ENCODE measurements at regions of chr2 and their contacts with region 1.

Region 1: GRCh38 chr2:69559442-69560146 is 83.9 kb downstream of the AAK1 start:
- DNase-seq: peak in 3 of 14 experiments; percentile 51 to 66 (median 65)
- ATAC-seq: peak; percentile 58
- H3K4me3 ChIP-seq: no peak overlapping the region
- H3K4me3 Mint-ChIP-seq: peak overlapping the region; percentile 30
- H3K27ac ChIP-seq: no peak overlapping the region
- H3K27ac Mint-ChIP-seq: peak overlapping the region; percentile 69
- H3K4me1 ChIP-seq: peaks cover 57% of the 10 kb centered on the region
- H3K4me1 Mint-ChIP-seq: peaks cover 91% of the 10 kb centered on the region
- H3K27me3 ChIP-seq: no peaks in the 10 kb centered on the region
- H3K27me3 Mint-ChIP-seq: no peaks in the 10 kb centered on the region
- CTCF ChIP-seq: peak; percentile 75

Region 2: DNA sequence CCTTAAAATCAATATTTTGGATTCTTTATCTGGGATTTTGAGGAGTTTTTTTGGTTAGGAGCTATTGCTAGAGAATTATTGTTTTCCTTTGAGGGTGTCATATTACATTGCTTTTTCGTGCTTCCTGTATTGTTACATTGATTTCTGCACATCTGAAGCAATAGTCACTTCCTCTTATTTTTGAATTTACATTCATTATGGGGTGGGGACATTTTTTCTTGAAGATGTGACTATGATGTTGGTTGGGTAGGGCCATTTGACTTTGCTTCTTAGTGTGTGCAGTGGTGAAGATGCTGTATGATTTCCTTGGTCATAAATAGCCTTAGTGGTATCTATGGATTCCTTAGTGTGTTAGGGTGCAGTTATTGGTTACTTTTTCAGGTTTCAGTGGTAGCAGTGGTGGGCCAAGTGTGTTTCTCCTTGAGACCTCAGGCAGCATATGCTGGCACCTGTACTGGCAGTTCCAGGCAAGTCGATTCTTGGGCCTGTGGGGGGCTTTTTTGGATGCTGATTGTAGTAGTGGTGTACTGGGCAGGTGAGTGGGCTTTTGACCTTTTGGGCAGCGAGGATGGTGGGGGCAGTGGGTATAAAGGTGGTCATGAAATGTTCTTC is 763.2 kb before region 1 on chr2:
- CTCF ChIA-PET with region 1: no interaction called
- POLR2A ChIA-PET with region 1: no interaction called
- intact Hi-C with region 1: no loop called
- DNase-seq: peak in 3 of 14 experiments; percentile 50 to 61 (median 51)
- ATAC-seq: peak; percentile 87
- H3K4me3 ChIP-seq: no peak overlapping the region
- H3K4me3 Mint-ChIP-seq: peak overlapping the region; percentile 76
- H3K27ac ChIP-seq: peak overlapping the region; percentile 25 to 58
- H3K27ac Mint-ChIP-seq: peak overlapping the region; percentile 91
- H3K4me1 ChIP-seq: peaks cover 40% of the 10 kb centered on the region
- H3K4me1 Mint-ChIP-seq: peaks cover 89% of the 10 kb centered on the region
- H3K27me3 ChIP-seq: no peaks in the 10 kb centered on the region
- H3K27me3 Mint-ChIP-seq: no peaks in the 10 kb centered on the region
- CTCF ChIP-seq: no peak

Region 3: GRCh38 chr2:69625078-69625795 is 65.6 kb after region 1 on chr2:
- CTCF ChIA-PET with region 1: interaction called, 7 read pairs
- POLR2A ChIA-PET with region 1: no interaction called
- intact Hi-C with region 1: loop called in 1 of 2 experiments (anchors 2 kb)
- DNase-seq: peak in 1 of 14 experiments; percentile 46
- ATAC-seq: peak; percentile 37
- H3K4me3 ChIP-seq: no peak overlapping the region
- H3K4me3 Mint-ChIP-seq: no peak overlapping the region
- H3K27ac ChIP-seq: no peak overlapping the region
- H3K27ac Mint-ChIP-seq: no peak overlapping the region
- H3K4me1 ChIP-seq: peaks cover 75% of the 10 kb centered on the region
- H3K4me1 Mint-ChIP-seq: peaks cover 5% of the 10 kb centered on the region
- H3K27me3 ChIP-seq: no peaks in the 10 kb centered on the region
- H3K27me3 Mint-ChIP-seq: no peaks in the 10 kb centered on the region
- CTCF ChIP-seq: no peak

Region 4: GRCh38 chr2:69717861-69718273 is 158.3 kb after region 1 on chr2:
- CTCF ChIA-PET with region 1: interaction called, 9 read pairs
- POLR2A ChIA-PET with region 1: no interaction called
- intact Hi-C with region 1: loop called (anchors 1 kb)
- DNase-seq: no peak
- ATAC-seq: no peak
- H3K4me3 ChIP-seq: no peak overlapping the region
- H3K4me3 Mint-ChIP-seq: no peak overlapping the region
- H3K27ac ChIP-seq: no peak overlapping the region
- H3K27ac Mint-ChIP-seq: no peak overlapping the region
- H3K4me1 ChIP-seq: peaks cover 13% of the 10 kb centered on the region
- H3K4me1 Mint-ChIP-seq: peaks cover 17% of the 10 kb centered on the region
- H3K27me3 ChIP-seq: no peaks in the 10 kb centered on the region
- H3K27me3 Mint-ChIP-seq: no peaks in the 10 kb centered on the region
- CTCF ChIP-seq: no peak